Activated CD4-positive, alpha-beta T cell treated with anti-CD3 and anti-CD28 coated beads, Interleukin-2, amount 10 ng/mL, durations not matched to agents 24 days and 14 days (primary cell): ENCODE measurements at regions of chr4 and their contacts with region 1.

Region 1: DNA sequence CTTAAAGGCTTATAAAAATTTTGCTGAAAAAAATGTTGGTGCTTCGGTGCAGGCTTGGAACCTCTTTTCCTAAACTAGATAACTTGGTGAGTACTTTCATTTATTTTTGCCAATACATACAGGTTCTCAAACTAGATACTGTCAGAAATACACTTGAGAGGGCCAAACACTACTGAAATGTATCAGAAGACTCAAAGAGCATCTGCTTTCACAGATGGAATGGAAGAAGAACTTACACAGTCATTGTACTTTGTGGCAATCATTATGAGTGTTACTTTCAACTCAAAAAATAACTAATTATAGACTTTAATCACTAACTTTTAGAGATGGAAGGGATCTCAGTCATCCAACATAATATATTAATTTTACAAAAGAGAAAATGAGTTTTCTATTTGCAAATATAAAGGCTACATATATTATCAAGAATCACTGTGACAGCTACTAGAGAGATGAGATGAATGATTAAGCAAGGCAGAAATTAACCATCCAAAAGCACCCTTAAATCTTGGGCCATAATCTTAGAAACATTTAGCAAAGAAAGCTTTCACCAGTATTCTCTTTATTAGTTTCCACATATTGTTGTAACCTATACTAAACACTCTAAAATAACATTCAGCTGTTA is 1.0 kb downstream of the ENAM start:
- DNase-seq: peak; percentile 2
- H3K4me3 Mint-ChIP-seq: no peak overlapping the region
- H3K27ac Mint-ChIP-seq: no peak overlapping the region
- H3K4me1 Mint-ChIP-seq: no peaks in the 10 kb centered on the region
- H3K27me3 Mint-ChIP-seq: peaks cover 6% of the 10 kb centered on the region

Region 2: GRCh38 chr4:70239884-70240591 is 389.5 kb before region 1 on chr4:
- intact Hi-C with region 1: no loop called
- DNase-seq: no peak
- H3K4me3 Mint-ChIP-seq: no peak overlapping the region
- H3K27ac Mint-ChIP-seq: no peak overlapping the region
- H3K4me1 Mint-ChIP-seq: no peaks in the 10 kb centered on the region
- H3K27me3 Mint-ChIP-seq: no peaks in the 10 kb centered on the region

Region 3: GRCh38 chr4:71009890-71010588 is 380.5 kb after region 1 on chr4:
- intact Hi-C with region 1: no loop called
- DNase-seq: peak; percentile 81
- H3K4me3 Mint-ChIP-seq: peak overlapping the region; percentile 3
- H3K27ac Mint-ChIP-seq: peak overlapping the region; percentile 83
- H3K4me1 Mint-ChIP-seq: peaks cover 40% of the 10 kb centered on the region
- H3K27me3 Mint-ChIP-seq: no peaks in the 10 kb centered on the region

Region 4: DNA sequence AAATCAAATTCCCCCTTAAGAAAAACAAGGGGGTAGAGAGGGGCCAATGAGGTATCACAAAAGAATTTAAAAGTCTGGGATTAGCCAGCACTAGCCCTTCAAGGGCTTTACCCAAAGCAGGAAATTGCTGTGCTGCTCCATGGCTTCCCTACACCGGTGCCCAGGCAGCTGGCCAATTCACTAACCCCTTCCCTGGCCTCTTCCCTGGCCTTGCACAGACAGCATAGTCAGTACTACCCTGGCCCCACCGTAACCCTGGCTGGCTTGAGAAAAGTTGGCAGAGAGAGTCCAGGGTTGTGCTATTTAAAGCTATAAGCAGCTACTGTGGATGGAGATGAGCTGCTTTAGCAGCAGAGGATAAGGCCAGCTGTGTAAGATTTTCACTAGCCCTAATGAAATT is 1896.4 kb after region 1 on chr4:
- intact Hi-C with region 1: loop called (anchors 5 kb)
- DNase-seq: no peak
- H3K4me3 Mint-ChIP-seq: no peak overlapping the region
- H3K27ac Mint-ChIP-seq: no peak overlapping the region
- H3K4me1 Mint-ChIP-seq: no peaks in the 10 kb centered on the region
- H3K27me3 Mint-ChIP-seq: no peaks in the 10 kb centered on the region